ENCODE measurements at regions of chr13 and their contacts with region 1.

Region 1: DNA sequence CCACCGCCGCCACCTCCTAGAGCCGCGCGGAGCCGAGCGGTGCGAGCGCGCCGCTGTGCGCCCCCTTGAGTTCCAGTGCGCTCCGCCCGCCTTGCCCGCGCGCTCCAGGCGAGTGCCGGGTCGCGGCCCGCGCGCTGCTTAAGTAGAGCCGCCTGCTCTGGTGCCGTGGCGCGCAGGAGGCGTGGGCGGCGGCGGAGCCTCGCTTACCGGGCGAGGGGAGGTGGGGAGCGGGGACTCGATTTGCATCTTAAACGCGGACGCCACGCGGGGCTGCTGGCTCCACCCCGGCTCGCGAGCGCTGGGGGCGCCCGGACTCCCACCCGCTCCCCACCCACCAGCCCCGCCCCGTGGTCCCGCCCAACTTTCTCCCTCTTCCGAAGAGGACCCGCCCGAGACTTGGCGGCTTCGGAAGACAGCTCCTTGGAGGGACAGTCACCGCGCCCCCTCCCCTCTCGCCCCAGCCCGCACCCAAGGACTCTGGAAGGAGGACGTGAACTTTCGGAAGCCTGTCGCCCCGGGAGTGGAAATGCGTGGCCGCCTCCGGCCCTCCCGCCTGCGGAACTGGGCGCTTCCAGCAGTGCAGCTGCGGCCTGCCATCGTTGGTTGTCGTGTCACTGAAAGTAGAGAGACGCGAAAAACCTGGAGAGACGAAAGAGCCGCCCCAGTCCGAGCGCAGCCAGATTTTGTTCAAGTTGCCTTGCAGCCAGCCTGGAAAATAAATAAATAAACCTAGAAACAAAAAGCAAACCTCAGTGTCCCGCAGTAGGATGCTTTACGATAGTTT is at the start of gene KCTD12:
- DNase-seq: peak; percentile 65 to 80 (median 70)
- H3K4me3 ChIP-seq: peak within 1 kb of the TSS; percentile 29 to 80
- H3K4me3 Mint-ChIP-seq: peak within 1 kb of the TSS; percentile 86 to 92 (median 88)
- H3K27ac ChIP-seq: peak within 1 kb of the TSS; percentile 27
- H3K27ac Mint-ChIP-seq: peak within 1 kb of the TSS in 6 of 7 donors; percentile 32 to 87 (median 70)
- H3K4me1 ChIP-seq: peaks cover 16% of the 10 kb centered on the region
- H3K4me1 Mint-ChIP-seq: peaks cover 15 to 46% (median 25%) of the 10 kb centered on the region in 4 donors
- H3K27me3 ChIP-seq: no peaks in the 10 kb centered on the region
- H3K27me3 Mint-ChIP-seq: peaks cover 2 to 5% of the 10 kb centered on the region in 2 donors
- total RNA-seq, gene KCTD12: 9.3 to 9.6 TPM

Region 2: DNA sequence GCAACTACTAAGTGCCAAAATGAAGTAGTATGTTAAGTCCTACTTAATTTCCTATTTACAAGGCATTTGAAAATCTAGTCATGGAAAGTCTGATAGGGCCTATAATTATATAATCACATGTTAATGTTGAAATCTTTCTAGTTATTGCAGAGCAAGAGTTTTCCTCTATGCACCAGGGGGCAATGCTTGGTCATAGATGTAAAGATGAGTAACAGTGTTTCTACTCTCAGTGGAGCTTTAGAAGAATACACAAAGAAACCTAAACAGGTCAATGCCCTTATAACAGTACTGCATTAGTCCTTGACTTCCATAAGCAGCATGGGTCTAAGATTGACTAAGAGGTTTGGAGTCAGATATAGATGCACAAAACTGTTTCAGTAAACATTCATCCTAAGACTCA is 218.9 kb before region 1 on chr13:
- CTCF ChIA-PET with region 1: interaction called, 9 read pairs
- POLR2A ChIA-PET with region 1: no interaction called
- intact Hi-C with region 1: loop called (anchors 5 kb)
- DNase-seq: peak in 1 of 5 donors; percentile 9
- H3K4me3 ChIP-seq: no peak overlapping the region
- H3K4me3 Mint-ChIP-seq: no peak overlapping the region
- H3K27ac ChIP-seq: no peak overlapping the region
- H3K27ac Mint-ChIP-seq: no peak overlapping the region
- H3K4me1 ChIP-seq: no peaks in the 10 kb centered on the region
- H3K4me1 Mint-ChIP-seq: no peaks in the 10 kb centered on the region
- H3K27me3 ChIP-seq: no peaks in the 10 kb centered on the region
- H3K27me3 Mint-ChIP-seq: peaks cover 0 to 6% of the 10 kb centered on the region in 2 donors

Region 3: DNA sequence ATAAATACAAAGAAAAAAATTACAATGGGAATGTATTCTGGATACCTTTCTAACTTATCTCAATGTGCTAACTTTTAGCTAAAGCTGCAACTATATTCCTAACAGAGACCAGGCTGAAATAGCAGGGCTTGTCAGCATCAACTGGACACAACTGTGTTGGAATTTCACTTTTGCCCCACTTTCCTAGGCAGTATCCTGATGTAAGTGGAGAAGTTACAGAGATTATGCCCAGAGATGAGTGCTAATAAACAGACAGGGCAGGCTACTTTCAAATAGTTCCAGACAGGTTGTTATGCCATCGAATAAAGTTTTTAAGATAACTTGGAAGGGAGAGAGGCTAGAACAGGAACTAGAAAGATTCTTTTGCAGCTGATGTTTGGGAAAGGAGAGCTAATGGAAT is 202.1 kb before region 1 on chr13:
- CTCF ChIA-PET with region 1: no interaction called
- POLR2A ChIA-PET with region 1: no interaction called
- intact Hi-C with region 1: no loop called
- DNase-seq: no peak
- H3K4me3 ChIP-seq: no peak overlapping the region
- H3K4me3 Mint-ChIP-seq: no peak overlapping the region
- H3K27ac ChIP-seq: no peak overlapping the region
- H3K27ac Mint-ChIP-seq: no peak overlapping the region
- H3K4me1 ChIP-seq: no peaks in the 10 kb centered on the region
- H3K4me1 Mint-ChIP-seq: no peaks in the 10 kb centered on the region
- H3K27me3 ChIP-seq: no peaks in the 10 kb centered on the region
- H3K27me3 Mint-ChIP-seq: peaks cover 0 to 13% of the 10 kb centered on the region in 2 donors

Region 4: DNA sequence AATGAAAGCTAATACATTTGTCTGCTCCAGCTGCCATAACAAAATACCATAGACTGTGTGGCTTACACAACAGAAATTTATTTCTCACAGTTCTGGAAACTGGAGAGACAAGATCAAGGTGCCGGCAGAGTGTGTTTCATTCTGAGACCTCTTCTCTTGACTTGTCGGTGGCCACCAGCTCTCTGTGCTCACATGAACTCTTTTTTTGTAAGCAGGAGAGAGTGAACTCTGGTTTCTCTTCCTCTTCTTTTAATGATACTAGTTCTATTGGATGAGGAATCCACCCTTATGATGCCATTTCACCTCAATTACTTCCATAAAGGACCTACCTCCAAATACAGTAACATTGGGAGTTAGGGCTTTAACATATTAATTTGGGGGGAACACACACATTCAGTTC is 12.0 kb before region 1 on chr13:
- CTCF ChIA-PET with region 1: interaction called, 26 read pairs
- POLR2A ChIA-PET with region 1: interaction called, 4 read pairs
- intact Hi-C with region 1: no loop called
- DNase-seq: no peak
- H3K4me3 ChIP-seq: no peak overlapping the region
- H3K4me3 Mint-ChIP-seq: no peak overlapping the region
- H3K27ac ChIP-seq: no peak overlapping the region
- H3K27ac Mint-ChIP-seq: no peak overlapping the region
- H3K4me1 ChIP-seq: peaks cover 9% of the 10 kb centered on the region
- H3K4me1 Mint-ChIP-seq: peaks cover 6 to 15% (median 10%) of the 10 kb centered on the region in 4 donors
- H3K27me3 ChIP-seq: no peaks in the 10 kb centered on the region
- H3K27me3 Mint-ChIP-seq: peaks cover 10 to 17% of the 10 kb centered on the region in 2 donors

Region 5: GRCh38 chr13:76991796-76992547 is 105.5 kb after region 1 on chr13 and contains the start of gene CLN5:
- CTCF ChIA-PET with region 1: interaction called, 4 read pairs
- POLR2A ChIA-PET with region 1: interaction called, 45 read pairs
- intact Hi-C with region 1: loop called (anchors 1 kb)
- DNase-seq: peak; percentile 95 to 98 (median 97)
- H3K4me3 ChIP-seq: peak within 1 kb of the TSS; percentile 88 to 93
- H3K4me3 Mint-ChIP-seq: peak within 1 kb of the TSS; percentile 92 to 99 (median 96)
- H3K27ac ChIP-seq: peak within 1 kb of the TSS; percentile 95
- H3K27ac Mint-ChIP-seq: peak within 1 kb of the TSS; percentile 98 to 100 (median 100)
- H3K4me1 ChIP-seq: peaks cover 37% of the 10 kb centered on the region
- H3K4me1 Mint-ChIP-seq: peaks cover 26 to 52% (median 41%) of the 10 kb centered on the region in 4 donors
- H3K27me3 ChIP-seq: no peaks in the 10 kb centered on the region
- H3K27me3 Mint-ChIP-seq: peaks cover 3 to 7% of the 10 kb centered on the region in 2 donors
- total RNA-seq, gene CLN5: 41.5 to 48.6 TPM

Region 6: DNA sequence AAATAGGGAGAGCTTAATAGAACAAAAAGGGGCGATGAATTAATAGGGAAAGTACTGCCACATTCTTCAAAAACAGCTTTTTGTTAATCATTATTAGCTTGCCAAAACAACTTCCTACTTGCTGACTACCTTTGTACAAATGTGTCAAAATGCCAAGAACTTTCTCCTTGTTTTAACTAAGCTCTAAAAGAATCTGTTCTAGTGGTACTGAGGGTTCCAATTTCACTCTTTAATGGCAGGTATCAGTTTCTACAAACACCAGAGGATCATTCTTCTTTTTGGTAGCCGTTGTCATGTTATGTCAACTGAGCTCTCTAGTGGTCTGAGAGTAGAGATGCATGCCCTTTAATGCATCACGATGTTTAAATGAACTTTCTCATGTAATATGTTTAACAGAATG is 169.9 kb after region 1 on chr13:
- CTCF ChIA-PET with region 1: no interaction called
- POLR2A ChIA-PET with region 1: no interaction called
- intact Hi-C with region 1: no loop called
- DNase-seq: no peak
- H3K4me3 ChIP-seq: no peak overlapping the region
- H3K4me3 Mint-ChIP-seq: no peak overlapping the region
- H3K27ac ChIP-seq: no peak overlapping the region
- H3K27ac Mint-ChIP-seq: peak overlapping the region in 1 of 7 donors; percentile 55
- H3K4me1 ChIP-seq: no peaks in the 10 kb centered on the region
- H3K4me1 Mint-ChIP-seq: peaks cover 0 to 1% (median 0%) of the 10 kb centered on the region in 4 donors
- H3K27me3 ChIP-seq: no peaks in the 10 kb centered on the region
- H3K27me3 Mint-ChIP-seq: no peaks in the 10 kb centered on the region

Region 7: GRCh38 chr13:77150651-77151050 is 264.2 kb after region 1 on chr13:
- CTCF ChIA-PET with region 1: no interaction called
- POLR2A ChIA-PET with region 1: no interaction called
- intact Hi-C with region 1: no loop called
- DNase-seq: no peak
- H3K4me3 ChIP-seq: no peak overlapping the region
- H3K4me3 Mint-ChIP-seq: no peak overlapping the region
- H3K27ac ChIP-seq: no peak overlapping the region
- H3K27ac Mint-ChIP-seq: no peak overlapping the region
- H3K4me1 ChIP-seq: no peaks in the 10 kb centered on the region
- H3K4me1 Mint-ChIP-seq: peaks cover 0 to 7% (median 5%) of the 10 kb centered on the region in 4 donors
- H3K27me3 ChIP-seq: no peaks in the 10 kb centered on the region
- H3K27me3 Mint-ChIP-seq: no peaks in the 10 kb centered on the region

Region 8: DNA sequence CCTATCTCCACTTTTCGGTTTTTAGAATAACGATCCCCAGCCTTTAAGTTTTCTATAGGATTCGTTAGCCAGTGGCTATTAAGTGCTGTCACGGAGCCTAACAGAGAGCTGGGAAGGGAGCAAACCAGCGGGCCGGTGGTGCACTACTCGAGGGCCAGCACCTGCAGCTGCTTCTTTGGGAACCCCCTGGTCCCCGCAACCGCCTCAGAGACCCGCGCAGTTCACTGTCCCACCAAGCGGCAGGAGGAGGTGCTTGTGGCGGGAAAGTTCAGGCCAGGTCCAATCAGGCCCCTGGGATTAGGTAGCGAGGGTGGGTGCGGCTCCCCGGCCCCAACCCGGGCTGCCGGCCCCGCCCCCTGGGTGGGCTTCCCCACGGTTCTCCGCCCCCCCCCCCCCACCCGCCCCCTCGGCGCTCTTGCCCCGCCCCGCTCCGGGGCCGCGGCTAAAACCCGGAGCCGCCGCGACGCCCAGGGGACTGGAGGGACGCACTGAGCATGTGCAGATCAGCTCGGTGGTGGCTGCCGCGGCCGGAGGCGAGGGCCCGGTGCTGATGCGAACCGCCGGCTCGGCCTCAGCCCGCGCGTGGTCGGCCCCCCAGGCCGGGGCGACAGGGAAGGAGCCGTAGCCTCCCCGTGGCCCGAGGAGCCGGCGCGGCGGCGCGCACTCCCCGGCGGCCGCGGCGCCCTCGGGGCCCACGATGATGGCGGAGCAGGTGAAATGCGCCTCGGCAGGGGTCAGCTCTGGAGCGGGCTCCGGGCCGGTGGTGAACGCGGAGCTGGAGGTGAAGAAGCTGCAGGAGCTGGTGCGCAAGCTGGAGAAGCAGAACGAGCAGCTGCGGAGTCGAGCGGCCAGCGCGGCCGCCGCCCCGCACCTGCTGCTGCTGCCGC is 811.0 kb after region 1 on chr13 and contains the start of gene SLAIN1:
- CTCF ChIA-PET with region 1: no interaction called
- POLR2A ChIA-PET with region 1: interaction called, 3 read pairs
- intact Hi-C with region 1: loop called (anchors 5 kb)
- DNase-seq: peak; percentile 84 to 91 (median 86)
- H3K4me3 ChIP-seq: peak within 1 kb of the TSS; percentile 84 to 90
- H3K4me3 Mint-ChIP-seq: peak within 1 kb of the TSS; percentile 97 to 100 (median 99)
- H3K27ac ChIP-seq: peak within 1 kb of the TSS; percentile 82
- H3K27ac Mint-ChIP-seq: peak within 1 kb of the TSS; percentile 85 to 97 (median 94)
- H3K4me1 ChIP-seq: peaks cover 38% of the 10 kb centered on the region
- H3K4me1 Mint-ChIP-seq: peaks cover 31 to 55% (median 41%) of the 10 kb centered on the region in 4 donors
- H3K27me3 ChIP-seq: no peaks in the 10 kb centered on the region
- H3K27me3 Mint-ChIP-seq: no peaks in the 10 kb centered on the region
- total RNA-seq, gene SLAIN1: 55.1 to 58.9 TPM

Measured in CD4-positive, alpha-beta memory T cell (primary cell).